ENCODE measurements at regions of chr2 and their contacts with region 1.

Region 1: GRCh38 chr2:172465417-172466334 is 38.3 kb downstream of the ITGA6 start:
- DNase-seq: no peak

Region 2: GRCh38 chr2:171598713-171599319 is 866.9 kb before region 1 on chr2:
- intact Hi-C with region 1: loop called (anchors 10 kb)
- DNase-seq: no peak

Region 3: DNA sequence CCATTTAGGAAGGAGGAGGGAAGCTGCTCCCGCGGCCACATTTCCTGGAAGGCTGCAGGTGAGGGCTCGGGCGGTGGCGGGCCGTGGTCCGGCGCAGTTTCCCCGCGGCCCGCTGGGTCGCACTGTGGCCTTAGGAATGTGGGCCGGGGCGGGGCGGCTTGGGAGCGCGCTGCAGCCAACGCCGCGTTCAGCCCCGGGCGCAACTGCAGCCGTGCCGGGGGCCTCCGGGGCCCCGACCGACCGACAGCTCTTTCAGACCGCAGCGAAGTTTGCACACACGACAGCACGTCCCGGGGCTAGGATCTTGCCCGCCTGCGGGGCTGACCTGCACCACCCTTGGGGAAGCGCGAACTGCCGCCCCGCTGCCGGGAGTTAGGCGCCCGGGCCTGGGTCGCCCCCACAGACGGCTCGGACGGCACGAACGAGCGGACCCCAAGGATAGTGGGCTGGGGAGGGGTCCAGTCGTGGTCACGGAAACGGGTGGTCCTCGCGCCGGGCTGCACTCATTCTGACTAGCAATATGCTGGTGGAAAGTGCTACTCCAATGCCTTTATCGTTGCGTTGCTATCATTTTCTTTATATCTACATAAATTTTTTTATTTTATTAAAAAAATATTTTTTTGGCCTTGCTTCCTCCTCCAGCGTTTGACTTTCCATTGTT is 293.0 kb before region 1 on chr2:
- intact Hi-C with region 1: loop called (anchors 1 kb)
- DNase-seq: peak; percentile 89

Region 4: DNA sequence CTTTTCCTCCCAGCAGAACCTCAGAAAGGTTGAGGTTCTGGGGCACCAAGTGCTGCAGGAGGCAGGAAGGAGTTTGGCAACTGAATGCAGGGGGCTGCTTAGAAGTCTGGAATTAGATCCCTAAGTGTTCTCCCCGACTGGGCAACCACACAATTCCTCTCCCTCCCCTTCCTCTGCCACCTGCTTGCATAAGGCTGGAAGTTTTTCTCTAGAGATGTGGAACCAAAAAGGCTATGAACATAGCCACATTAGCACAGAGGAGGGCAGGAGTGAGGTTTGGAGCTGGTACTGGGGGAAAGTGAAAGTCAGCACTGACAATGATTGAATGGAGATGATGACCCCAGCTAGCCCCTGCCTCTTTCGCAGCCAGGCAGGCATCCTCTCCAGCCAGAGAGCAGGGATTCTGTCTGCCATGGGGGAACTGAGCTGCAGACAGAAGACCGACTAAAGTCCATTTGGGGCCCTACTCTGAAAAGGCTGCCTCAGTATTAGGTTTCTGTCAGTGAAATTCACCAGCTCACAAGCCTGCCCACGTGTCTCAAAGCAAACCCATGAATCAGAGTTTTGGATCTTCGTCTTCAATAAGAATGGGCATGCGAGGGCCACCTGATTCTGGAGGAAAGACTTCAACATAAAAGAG is 126.2 kb before region 1 on chr2:
- intact Hi-C with region 1: loop called (anchors 10 kb)
- DNase-seq: no peak

Region 5: GRCh38 chr2:172394002-172394401 is 71.7 kb before region 1 on chr2:
- intact Hi-C with region 1: loop called (anchors 5 kb)
- DNase-seq: no peak

Region 6: DNA sequence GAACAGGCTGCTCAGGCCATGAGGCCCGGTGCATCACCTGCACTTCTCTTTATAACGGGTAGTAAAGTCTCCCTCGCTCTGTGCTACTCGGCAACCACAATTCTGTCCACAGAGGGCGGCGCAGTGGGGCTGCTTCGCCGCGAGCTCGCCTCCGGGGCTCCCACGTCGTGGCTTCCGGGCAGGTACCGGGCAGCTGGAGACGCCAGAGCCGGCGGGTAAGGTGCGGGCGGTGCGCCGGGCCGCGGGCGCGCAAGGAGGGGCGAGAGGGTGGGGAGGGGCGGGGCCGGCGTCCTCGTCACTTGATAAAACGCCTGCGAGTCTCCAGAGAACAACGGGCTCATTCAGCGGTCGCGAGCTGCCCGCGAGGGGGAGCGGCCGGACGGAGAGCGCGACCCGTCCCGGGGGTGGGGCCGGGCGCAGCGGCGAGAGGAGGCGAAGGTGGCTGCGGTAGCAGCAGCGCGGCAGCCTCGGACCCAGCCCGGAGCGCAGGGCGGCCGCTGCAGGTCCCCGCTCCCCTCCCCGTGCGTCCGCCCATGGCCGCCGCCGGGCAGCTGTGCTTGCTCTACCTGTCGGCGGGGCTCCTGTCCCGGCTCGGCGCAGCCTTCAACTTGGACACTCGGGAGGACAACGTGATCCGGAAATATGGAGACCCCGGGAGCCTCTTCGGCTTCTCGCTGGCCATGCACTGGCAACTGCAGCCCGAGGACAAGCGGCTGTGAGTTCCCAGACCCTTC is 38.3 kb before region 1 on chr2 and contains the start of gene ITGA6:
- intact Hi-C with region 1: loop called (anchors 2 kb)
- DNase-seq: peak; percentile 90
- total RNA-seq, gene ITGA6: 38.9 TPM

Region 7: GRCh38 chr2:172480301-172481218 is 14.9 kb after region 1 on chr2:
- intact Hi-C with region 1: no loop called
- DNase-seq: no peak

Measured in cardiac septum (tissue), 1 donor.